Activated B cell treated with CpG ODN at 0.5 μM for 24 hours (primary cell): ENCODE measurements at regions of chr3 and their contacts with region 1.

Region 1: DNA sequence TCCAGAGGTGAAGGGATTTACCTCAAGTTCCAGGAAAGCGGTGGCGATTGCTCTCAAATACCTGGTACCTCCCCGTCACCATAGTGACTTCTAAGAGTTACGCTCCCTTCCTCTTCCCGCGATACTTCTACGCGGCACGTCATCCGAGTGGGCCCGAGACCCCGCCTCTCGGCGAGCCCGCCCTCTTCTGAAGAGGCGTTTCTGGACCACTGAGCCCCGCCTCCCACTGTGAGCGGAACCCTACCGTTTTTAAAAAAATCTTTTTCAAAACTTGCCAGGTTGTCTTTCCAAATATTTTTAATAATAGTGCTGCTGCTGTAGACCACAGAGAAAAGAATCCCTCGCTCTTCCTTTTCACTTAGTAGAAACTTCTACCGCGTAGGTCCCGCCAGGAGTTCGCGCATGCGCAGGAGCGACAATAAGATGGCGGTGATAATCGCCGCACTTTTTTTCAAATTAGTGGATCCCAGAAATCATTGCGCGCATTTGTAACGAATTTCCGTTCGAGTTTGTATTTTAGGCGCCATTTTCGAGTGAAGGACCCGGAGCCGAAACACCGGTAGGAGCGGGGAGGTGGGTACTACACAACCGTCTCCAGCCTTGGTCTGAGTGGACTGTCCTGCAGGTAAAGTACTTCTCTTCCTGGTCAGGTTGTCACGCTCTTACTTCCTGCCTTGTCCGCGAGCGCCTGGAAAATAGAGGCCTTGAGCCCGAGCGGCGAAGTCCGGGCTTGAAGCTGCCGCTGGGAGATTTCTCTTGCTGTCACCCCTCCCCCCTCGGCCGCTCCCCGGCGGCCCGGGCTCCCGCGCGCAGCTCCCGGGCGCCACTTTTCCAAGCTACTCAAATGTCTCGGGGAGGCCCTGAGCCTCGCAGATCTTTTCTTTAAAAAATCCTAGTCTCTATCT is at the starts of genes IFT80 and SMC4:
- DNase-seq: peak; percentile 90
- ATAC-seq: peak; percentile 95
- H3K4me3 Mint-ChIP-seq: peak within 1 kb of the TSS; percentile 97
- H3K27ac Mint-ChIP-seq: peak within 1 kb of the TSS; percentile 99
- H3K4me1 Mint-ChIP-seq: peaks cover 47% of the 10 kb centered on the region
- H3K27me3 Mint-ChIP-seq: peaks cover 2% of the 10 kb centered on the region
- CTCF ChIP-seq: no peak
- total RNA-seq, gene IFT80: 20.8 and 26.7 TPM in 2 replicates
- total RNA-seq, gene SMC4: 35.2 and 40.4 TPM in 2 replicates

Region 2: DNA sequence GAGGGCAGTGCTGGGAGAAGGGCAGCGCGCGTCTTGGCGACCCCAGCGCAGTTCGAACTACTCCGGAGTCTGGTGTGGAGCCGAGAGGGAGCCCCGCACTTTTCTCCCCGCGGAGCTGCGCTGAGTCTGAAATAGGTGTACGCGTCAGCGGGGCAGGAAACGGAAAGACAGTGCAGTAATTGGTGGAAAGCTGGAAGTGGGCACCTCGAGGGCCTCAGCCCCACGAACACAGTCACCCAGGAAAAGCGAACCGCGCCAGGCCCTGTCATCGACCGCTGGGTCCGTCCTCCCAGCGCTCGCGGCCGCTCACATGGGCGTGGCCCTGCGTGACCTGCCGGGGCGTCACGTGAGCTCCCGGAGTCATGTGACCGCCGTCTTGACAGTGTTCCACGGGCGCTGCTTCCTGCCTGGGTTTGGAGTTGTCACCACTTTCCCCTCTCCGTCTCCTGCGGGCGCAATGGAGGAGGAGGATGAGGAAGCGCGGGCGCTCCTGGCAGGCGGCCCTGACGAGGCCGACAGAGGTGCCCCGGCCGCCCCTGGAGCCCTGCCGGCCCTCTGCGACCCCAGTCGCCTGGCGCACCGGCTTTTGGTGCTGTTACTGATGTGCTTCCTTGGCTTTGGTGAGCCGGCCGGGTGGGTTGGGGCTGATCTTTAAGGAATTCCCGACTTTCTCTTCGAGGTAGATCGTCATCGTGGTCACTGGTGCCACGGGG is 1597.5 kb before region 1 on chr3 and contains the start of gene MFSD1:
- CTCF ChIA-PET with region 1: no interaction called
- POLR2A ChIA-PET with region 1: no interaction called
- intact Hi-C with region 1: loop called (anchors 1 kb)
- DNase-seq: peak; percentile 82
- ATAC-seq: peak; percentile 89
- H3K4me3 Mint-ChIP-seq: peak within 1 kb of the TSS; percentile 94
- H3K27ac Mint-ChIP-seq: peak within 1 kb of the TSS; percentile 87
- H3K4me1 Mint-ChIP-seq: peaks cover 37% of the 10 kb centered on the region
- H3K27me3 Mint-ChIP-seq: no peaks in the 10 kb centered on the region
- CTCF ChIP-seq: no peak
- total RNA-seq, gene MFSD1: 36.8 and 41.6 TPM in 2 replicates

Region 3: DNA sequence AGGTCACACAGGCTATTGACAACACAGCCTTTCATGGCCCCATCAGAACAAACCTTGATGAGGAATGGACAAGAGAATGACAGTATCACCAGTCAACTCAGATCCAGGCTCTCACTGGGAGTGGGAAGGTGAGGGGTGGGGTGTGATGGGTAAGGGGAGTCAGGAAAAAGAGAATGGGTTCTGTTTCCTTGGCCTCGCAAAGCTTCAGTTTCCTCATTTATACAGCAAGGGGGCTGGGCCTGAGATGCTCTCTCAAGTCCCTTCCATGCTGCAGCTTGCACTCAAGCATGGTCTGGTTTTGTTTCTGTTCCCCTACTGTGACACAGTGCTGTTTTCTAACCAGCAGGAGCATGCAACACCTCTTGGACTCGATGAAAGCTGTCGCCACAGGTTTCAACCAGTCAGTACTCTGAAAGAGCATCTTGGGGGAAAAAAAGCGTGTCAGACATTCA is 476.5 kb before region 1 on chr3:
- CTCF ChIA-PET with region 1: no interaction called
- POLR2A ChIA-PET with region 1: no interaction called
- intact Hi-C with region 1: loop called (anchors 2 kb)
- DNase-seq: peak; percentile 29
- ATAC-seq: peak; percentile 98
- H3K4me3 Mint-ChIP-seq: peak overlapping the region; percentile 42
- H3K27ac Mint-ChIP-seq: peak overlapping the region; percentile 59
- H3K4me1 Mint-ChIP-seq: peaks cover 38% of the 10 kb centered on the region
- H3K27me3 Mint-ChIP-seq: no peaks in the 10 kb centered on the region
- CTCF ChIP-seq: no peak

Region 4: DNA sequence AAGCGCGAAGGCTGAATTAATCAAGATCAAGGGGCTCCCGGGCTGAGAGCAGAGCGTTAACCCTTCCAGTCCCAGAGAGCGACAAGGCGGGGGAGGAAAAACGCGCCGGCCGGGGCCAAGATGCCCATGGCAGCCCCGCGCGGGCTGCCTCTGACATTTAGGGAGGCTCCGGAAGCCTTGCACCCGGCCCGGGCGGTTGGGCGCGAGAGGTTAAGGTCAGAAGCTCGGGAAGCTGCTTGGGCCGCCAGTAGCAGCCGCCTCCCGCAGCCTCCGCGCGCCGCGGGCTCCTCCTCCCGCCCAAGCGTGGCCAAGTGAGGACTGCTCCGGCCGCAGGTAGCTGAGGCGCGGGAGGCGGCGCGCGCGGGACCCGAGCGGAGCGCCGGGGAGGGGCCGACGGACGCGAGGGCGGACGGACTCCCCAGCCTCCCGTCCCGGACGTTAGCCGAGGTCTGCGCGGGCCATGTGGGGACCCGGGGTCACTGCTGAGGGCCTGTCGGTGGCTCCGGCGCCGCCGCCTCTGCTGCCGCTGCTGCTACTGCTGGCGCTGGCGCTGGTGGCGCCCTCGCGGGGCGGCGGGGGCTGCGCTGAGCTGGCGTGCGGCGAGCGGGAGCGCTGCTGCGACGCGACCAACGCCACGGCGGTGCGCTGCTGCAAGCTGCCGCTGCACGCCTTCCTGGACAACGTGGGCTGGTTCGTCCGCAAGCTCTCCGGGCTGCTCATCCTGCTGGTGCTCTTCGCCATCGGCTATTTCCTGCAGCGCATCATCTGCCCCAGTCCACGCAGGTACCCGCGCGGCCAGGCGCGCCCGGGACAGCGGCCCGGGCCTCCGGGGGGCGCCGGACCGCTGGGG is 174.0 kb before region 1 on chr3 and contains the start of gene C3orf80:
- CTCF ChIA-PET with region 1: interaction called, 3 read pairs
- POLR2A ChIA-PET with region 1: no interaction called
- intact Hi-C with region 1: loop called (anchors 2 kb)
- DNase-seq: peak; percentile 41
- ATAC-seq: peak; percentile 78
- H3K4me3 Mint-ChIP-seq: peak within 1 kb of the TSS; percentile 71
- H3K27ac Mint-ChIP-seq: no peak within 1 kb of the TSS
- H3K4me1 Mint-ChIP-seq: peaks cover 21% of the 10 kb centered on the region
- H3K27me3 Mint-ChIP-seq: peaks cover 37% of the 10 kb centered on the region
- CTCF ChIP-seq: no peak
- total RNA-seq, gene C3orf80: not detected in 2 replicates

Region 5: DNA sequence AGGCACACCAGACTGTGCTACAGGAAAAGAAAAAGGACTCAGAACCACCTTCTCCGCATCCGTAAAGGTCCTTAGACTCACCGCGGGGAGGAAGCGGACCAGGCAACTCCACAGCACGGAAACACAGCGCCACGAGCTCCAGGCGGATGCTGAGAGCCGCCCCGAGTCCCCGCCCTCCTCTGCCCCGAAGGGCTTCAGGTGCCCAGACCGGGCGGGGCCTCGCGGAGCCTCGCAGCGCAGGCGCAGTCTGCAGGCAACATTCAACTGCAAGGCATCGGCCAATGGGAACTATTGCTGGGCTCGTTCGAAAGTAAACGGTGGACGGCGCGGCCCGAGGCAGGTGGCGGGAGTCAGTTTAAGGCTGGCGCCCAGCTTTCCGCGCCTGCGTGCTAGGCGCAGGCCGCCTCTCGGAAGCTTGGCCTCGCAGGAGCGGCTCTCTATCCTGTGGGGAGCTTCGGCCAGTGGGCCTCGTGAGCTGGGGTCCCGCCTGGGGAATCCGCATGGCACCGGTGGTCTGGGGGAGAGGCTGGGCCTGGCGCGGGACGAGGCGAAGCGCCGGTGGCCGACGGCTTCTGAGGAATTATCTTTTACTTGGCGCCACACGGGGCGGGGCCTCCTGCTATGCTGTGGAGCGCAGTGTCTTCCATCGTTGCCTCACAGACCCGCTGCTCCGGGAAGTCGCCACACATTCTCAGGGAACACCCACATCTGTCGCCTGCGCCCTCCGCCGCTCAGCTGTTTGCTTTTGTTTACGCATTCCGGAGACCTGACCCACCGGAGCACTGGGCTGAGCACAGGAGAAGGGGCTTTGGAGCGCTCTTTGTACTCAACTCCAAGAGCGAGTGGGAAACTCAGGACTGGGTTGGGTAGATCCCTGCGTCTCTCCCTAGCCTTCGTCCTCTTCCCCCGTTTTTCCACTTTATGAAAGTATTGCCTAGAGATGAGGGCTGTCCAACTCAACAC is 50.5 kb after region 1 on chr3 and contains the start of gene TRIM59:
- CTCF ChIA-PET with region 1: interaction called, 3 read pairs
- POLR2A ChIA-PET with region 1: interaction called, 16 read pairs
- intact Hi-C with region 1: loop called (anchors 1 kb)
- DNase-seq: peak; percentile 92
- ATAC-seq: peak; percentile 96
- H3K4me3 Mint-ChIP-seq: peak within 1 kb of the TSS; percentile 94
- H3K27ac Mint-ChIP-seq: peak within 1 kb of the TSS; percentile 90
- H3K4me1 Mint-ChIP-seq: peaks cover 33% of the 10 kb centered on the region
- H3K27me3 Mint-ChIP-seq: no peaks in the 10 kb centered on the region
- CTCF ChIP-seq: no peak
- total RNA-seq, gene TRIM59: 23.4 TPM in 2 replicates

Region 6: DNA sequence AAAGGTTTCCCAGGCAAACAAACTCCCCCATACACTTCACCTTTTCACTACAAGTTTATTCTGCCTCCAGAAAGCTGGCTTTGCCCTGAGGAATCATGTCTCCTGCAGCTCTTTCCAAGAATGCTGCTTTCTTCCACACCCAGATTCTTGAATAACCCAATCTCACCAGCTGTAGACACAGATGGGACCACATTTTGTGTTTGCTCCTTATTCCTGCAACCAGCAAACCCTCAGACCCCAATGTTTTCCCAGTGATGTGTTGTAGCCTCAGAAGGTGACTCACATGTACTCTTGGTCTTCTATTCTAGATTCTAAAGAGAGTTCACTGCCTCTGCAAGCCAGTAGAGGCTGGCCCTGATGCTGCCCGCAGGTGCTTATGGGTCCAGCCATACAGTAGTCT is 73.8 kb after region 1 on chr3:
- CTCF ChIA-PET with region 1: no interaction called
- POLR2A ChIA-PET with region 1: no interaction called
- intact Hi-C with region 1: no loop called
- DNase-seq: no peak
- ATAC-seq: no peak
- H3K4me3 Mint-ChIP-seq: no peak overlapping the region
- H3K27ac Mint-ChIP-seq: no peak overlapping the region
- H3K4me1 Mint-ChIP-seq: peaks cover 4% of the 10 kb centered on the region
- H3K27me3 Mint-ChIP-seq: no peaks in the 10 kb centered on the region
- CTCF ChIP-seq: no peak

Region 7: GRCh38 chr3:161220850-161221753 is 821.7 kb after region 1 on chr3 and contains the start of gene NMD3:
- CTCF ChIA-PET with region 1: no interaction called
- POLR2A ChIA-PET with region 1: interaction called, 5 read pairs
- intact Hi-C with region 1: loop called (anchors 5 kb)
- DNase-seq: peak; percentile 87
- ATAC-seq: peak; percentile 95
- H3K4me3 Mint-ChIP-seq: peak within 1 kb of the TSS; percentile 91
- H3K27ac Mint-ChIP-seq: peak within 1 kb of the TSS; percentile 86
- H3K4me1 Mint-ChIP-seq: peaks cover 33% of the 10 kb centered on the region
- H3K27me3 Mint-ChIP-seq: peaks cover 6% of the 10 kb centered on the region
- CTCF ChIP-seq: no peak
- total RNA-seq, gene NMD3: 44.2 and 45.8 TPM in 2 replicates